CD8-positive, alpha-beta memory T cell (primary cell): ENCODE measurements at regions of chr19 and their contacts with region 1.

Region 1: GRCh38 chr19:56080669-56081401 is 40.3 kb downstream of the ZNF787 start:
- DNase-seq: peak; percentile 38 to 73 (median 53)
- H3K4me3 ChIP-seq: peak overlapping the region; percentile 49
- H3K4me3 Mint-ChIP-seq: peak overlapping the region; percentile 66 to 91 (median 82)
- H3K27ac ChIP-seq: no peak overlapping the region
- H3K27ac Mint-ChIP-seq: peak overlapping the region in 6 of 8 donors; percentile 12 to 70 (median 60)
- H3K4me1 ChIP-seq: peaks cover 10% of the 10 kb centered on the region
- H3K4me1 Mint-ChIP-seq: peaks cover 9 to 12% (median 11%) of the 10 kb centered on the region in 3 donors
- H3K27me3 ChIP-seq: no peaks in the 10 kb centered on the region
- H3K27me3 Mint-ChIP-seq: peaks cover 2 to 9% of the 10 kb centered on the region in 2 donors

Region 2: DNA sequence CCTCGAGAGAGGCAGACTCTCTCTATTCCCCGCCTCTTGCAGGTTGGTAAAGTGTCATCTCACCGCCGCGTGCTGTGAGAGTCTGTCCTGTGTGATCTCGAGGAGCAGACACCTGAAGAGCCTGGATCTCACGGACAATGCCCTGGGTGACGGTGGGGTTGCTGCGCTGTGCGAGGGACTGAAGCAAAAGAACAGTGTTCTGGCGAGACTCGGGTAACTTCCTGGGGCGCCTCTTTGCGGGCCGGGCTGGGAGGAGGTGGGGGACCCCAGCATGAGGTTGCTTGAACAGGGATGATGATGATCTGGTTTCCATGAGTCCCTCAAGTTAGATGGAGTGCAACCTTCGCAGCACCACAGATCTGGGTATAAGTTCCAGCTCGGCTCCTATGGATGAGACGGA is 27.2 kb before region 1 on chr19:
- CTCF ChIA-PET with region 1: no interaction called
- POLR2A ChIA-PET with region 1: no interaction called
- DNase-seq: no peak
- H3K4me3 ChIP-seq: no peak overlapping the region
- H3K4me3 Mint-ChIP-seq: no peak overlapping the region
- H3K27ac ChIP-seq: no peak overlapping the region
- H3K27ac Mint-ChIP-seq: no peak overlapping the region
- H3K4me1 ChIP-seq: no peaks in the 10 kb centered on the region
- H3K4me1 Mint-ChIP-seq: no peaks in the 10 kb centered on the region
- H3K27me3 ChIP-seq: peaks cover 7% of the 10 kb centered on the region
- H3K27me3 Mint-ChIP-seq: peaks cover 8 to 23% of the 10 kb centered on the region in 2 donors

Region 3: DNA sequence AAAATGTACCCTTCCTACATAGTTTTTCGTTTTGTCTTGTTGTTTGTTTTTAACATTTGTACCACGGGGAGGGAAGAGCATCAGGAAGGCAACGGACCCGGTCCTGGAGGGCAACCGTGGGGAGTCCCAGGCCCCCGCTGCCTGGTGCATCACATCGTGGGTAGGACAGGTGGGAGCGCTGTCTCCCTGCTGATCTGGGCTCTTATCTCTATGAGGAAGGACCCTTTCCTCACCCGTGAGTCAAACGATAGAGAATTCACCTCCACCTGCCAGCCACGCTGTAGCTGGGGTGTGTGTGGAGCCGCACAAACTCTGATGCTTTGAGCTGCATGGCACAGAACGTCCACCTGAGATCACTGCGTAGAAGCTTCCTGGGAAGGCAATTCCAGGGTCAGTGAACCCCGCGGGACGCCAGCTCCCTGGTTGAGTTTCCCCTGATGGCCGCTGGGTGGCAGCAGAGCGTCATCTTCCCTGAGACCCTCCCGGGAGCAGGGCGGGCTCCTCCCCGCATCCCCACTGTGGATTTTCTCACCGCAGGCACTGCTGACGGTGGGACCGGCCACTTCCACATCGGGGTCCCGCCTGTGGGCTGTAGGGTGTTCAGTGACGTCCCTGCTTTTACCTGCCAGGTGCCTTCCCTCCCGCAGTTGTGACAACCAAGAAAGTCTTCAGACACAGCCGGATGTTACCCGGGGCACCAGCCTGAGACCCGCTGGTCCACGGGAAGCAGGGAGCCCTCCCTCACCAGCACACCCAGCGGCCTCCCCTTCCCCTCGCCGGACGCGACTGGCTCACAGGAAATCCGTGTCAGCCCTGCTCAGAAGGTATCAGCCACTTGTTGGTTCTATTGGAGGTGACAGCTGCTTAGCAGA is 14.4 kb before region 1 on chr19:
- CTCF ChIA-PET with region 1: interaction called, 12 read pairs
- POLR2A ChIA-PET with region 1: no interaction called
- DNase-seq: peak; percentile 50 to 72 (median 54)
- H3K4me3 ChIP-seq: peak overlapping the region; percentile 28
- H3K4me3 Mint-ChIP-seq: peak overlapping the region; percentile 46 to 84 (median 67)
- H3K27ac ChIP-seq: no peak overlapping the region
- H3K27ac Mint-ChIP-seq: peak overlapping the region in 2 of 8 donors; percentile 38 to 64
- H3K4me1 ChIP-seq: peaks cover 10% of the 10 kb centered on the region
- H3K4me1 Mint-ChIP-seq: peaks cover 11 to 14% (median 14%) of the 10 kb centered on the region in 3 donors
- H3K27me3 ChIP-seq: no peaks in the 10 kb centered on the region
- H3K27me3 Mint-ChIP-seq: peaks cover 18 to 37% of the 10 kb centered on the region in 2 donors

Region 4: DNA sequence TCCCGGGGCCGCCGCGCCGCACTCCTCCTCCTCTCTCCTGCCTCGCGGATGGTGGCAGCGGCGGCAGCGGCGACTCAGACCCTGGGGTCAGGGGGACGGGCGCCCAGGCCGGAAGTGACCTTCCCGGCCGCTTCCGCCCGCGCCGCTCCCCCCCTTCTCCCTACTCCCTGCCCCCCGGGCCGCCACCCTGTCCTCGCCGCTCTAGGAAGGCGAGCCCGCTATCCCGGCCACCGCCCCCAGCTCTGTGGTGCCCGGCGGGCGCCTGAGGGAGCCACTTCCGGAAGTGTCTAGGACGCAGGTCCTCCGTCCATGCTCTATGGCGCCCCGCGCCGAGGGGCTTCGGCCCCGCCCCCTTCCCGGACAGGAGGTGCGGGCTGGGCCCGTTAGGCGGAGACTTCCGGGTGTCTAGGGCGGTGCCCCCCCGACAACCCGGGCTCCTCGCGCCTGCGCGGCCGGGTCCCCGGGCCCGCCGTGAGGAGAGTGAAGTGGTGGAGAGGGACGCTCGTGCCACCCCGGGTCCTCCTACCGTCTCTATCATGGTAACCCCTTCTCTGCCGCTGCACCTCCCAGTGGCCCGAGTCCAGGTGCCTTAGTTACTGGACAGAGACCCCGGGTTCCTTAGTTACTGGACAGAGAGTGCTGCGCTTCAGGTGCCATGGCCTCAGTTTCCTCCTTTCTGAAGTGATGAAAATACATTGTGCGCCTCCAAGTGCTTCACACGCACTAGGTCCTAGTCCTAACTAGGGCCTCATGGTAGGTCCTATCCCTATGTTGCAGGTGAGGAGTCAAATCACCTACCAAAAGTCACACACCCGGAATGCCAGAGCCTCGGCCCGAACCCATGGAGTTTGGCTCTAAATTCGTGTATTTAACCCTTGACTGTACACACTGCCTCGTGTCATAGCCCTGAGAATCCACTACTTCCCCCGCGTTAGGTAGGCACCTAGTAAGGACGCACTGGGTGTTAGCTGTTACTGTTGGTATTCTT is 40.6 kb after region 1 on chr19 and contains the start of gene ZNF787:
- CTCF ChIA-PET with region 1: no interaction called
- POLR2A ChIA-PET with region 1: no interaction called
- DNase-seq: peak; percentile 95 to 99 (median 98)
- H3K4me3 ChIP-seq: peak within 1 kb of the TSS; percentile 69
- H3K4me3 Mint-ChIP-seq: peak within 1 kb of the TSS; percentile 81 to 99 (median 87)
- H3K27ac ChIP-seq: peak within 1 kb of the TSS; percentile 77
- H3K27ac Mint-ChIP-seq: peak within 1 kb of the TSS; percentile 87 to 100 (median 93)
- H3K4me1 ChIP-seq: peaks cover 32% of the 10 kb centered on the region
- H3K4me1 Mint-ChIP-seq: peaks cover 30 to 43% (median 39%) of the 10 kb centered on the region in 3 donors
- H3K27me3 ChIP-seq: no peaks in the 10 kb centered on the region
- H3K27me3 Mint-ChIP-seq: no peaks in the 10 kb centered on the region
- total RNA-seq, gene ZNF787: 34.7 to 38.7 TPM

Region 5: GRCh38 chr19:56170261-56170660 is 89.4 kb after region 1 on chr19:
- CTCF ChIA-PET with region 1: interaction called, 15 read pairs
- POLR2A ChIA-PET with region 1: no interaction called
- DNase-seq: no peak
- H3K4me3 ChIP-seq: no peak overlapping the region
- H3K4me3 Mint-ChIP-seq: no peak overlapping the region
- H3K27ac ChIP-seq: no peak overlapping the region
- H3K27ac Mint-ChIP-seq: no peak overlapping the region
- H3K4me1 ChIP-seq: no peaks in the 10 kb centered on the region
- H3K4me1 Mint-ChIP-seq: peaks cover 0 to 3% (median 2%) of the 10 kb centered on the region in 3 donors
- H3K27me3 ChIP-seq: no peaks in the 10 kb centered on the region
- H3K27me3 Mint-ChIP-seq: peaks cover 8 to 18% of the 10 kb centered on the region in 2 donors

Region 6: DNA sequence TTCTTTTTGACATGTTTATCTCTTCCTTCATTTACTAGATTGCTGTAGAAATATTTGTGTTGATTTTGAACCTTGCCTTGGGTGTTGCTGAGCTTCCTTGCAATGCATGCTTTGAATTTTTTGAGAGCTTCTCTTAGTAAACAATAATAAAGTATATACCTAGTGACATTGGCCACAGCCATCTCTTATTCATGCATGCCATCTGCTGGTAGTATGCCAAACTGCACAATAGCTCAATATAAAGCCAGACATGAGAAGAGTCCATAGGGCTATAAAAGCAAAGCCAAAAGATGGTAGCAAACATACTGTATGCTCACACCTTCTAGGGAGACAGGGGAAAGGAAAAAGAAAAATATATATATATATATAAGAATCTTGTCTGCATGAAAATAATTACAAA is 252.7 kb after region 1 on chr19:
- CTCF ChIA-PET with region 1: interaction called, 13 read pairs
- POLR2A ChIA-PET with region 1: no interaction called
- DNase-seq: peak in 3 of 5 donors; percentile 16 to 28 (median 21)
- H3K4me3 ChIP-seq: no peak overlapping the region
- H3K4me3 Mint-ChIP-seq: no peak overlapping the region
- H3K27ac ChIP-seq: no peak overlapping the region
- H3K27ac Mint-ChIP-seq: no peak overlapping the region
- H3K4me1 ChIP-seq: no peaks in the 10 kb centered on the region
- H3K4me1 Mint-ChIP-seq: no peaks in the 10 kb centered on the region
- H3K27me3 ChIP-seq: no peaks in the 10 kb centered on the region
- H3K27me3 Mint-ChIP-seq: peaks cover 3 to 14% of the 10 kb centered on the region in 2 donors